Heart left ventricle (tissue), 16 donors: ENCODE measurements at regions of chr5 and their contacts with region 1.

Region 1: DNA sequence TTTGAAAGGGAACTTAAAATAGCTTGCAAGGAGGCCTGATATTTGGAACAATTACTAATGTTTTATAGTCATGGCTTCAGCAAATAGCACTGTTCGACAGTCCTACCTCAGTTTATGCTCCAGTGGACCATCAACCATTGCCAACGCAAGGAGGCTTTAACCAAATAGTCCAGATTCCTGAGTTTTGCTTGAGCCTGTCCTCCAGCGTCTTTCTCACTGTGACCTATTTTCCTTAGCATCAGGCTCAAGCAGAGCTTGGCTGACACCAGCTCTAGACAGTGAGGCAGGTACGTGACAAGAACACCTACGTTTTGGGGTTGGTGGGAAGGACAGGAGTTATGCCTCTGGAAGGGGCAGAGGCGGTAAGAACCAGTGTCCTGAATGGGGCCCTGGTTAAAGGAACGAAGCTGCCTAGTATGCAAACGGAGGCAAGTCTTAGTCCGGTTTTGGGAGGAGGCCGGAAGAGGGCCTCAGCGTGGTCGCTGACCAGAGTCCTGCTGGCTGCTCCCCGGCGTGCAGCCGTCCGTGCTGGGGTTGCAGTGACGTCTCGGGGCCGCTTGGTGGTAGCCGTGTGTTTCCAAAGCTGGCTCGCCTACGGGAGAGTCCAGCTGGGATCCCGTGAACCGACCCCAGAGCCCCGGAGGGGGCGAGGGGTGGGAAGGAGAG is 998 bp upstream of the FGF18 start:
- DNase-seq: peak; percentile 83 to 91 (median 85)
- ATAC-seq: peak; percentile 79 to 86 (median 80)
- H3K4me3 ChIP-seq: peak overlapping the region; percentile 44 to 77 (median 59)
- H3K27ac ChIP-seq: peak overlapping the region in 8 of 12 donors; percentile 73 to 93 (median 84)
- H3K4me1 ChIP-seq: peaks cover 4 to 54% (median 26%) of the 10 kb centered on the region in 12 donors
- H3K27me3 ChIP-seq: peaks cover 0 to 29% (median 0%) of the 10 kb centered on the region in 9 donors
- CTCF ChIP-seq: peak; percentile 77 to 99 (median 94)
- POLR2A ChIP-seq: no peak

Region 2: GRCh38 chr5:171137768-171138525 is 280.5 kb before region 1 on chr5:
- intact Hi-C with region 1: no loop called
- DNase-seq: no peak
- ATAC-seq: no peak
- H3K4me3 ChIP-seq: no peak overlapping the region
- H3K27ac ChIP-seq: no peak overlapping the region
- H3K4me1 ChIP-seq: no peaks in the 10 kb centered on the region
- H3K27me3 ChIP-seq: no peaks in the 10 kb centered on the region
- CTCF ChIP-seq: no peak
- POLR2A ChIP-seq: no peak

Region 3: GRCh38 chr5:171450423-171451331 is 32.2 kb after region 1 on chr5:
- intact Hi-C with region 1: no loop called
- DNase-seq: peak; percentile 56 to 80 (median 75)
- ATAC-seq: peak in 3 of 4 donors; percentile 60 to 70 (median 65)
- H3K4me3 ChIP-seq: peak overlapping the region in 11 of 12 donors; percentile 19 to 63 (median 52)
- H3K27ac ChIP-seq: peak overlapping the region; percentile 46 to 91 (median 83)
- H3K4me1 ChIP-seq: peaks cover 0 to 31% (median 11%) of the 10 kb centered on the region in 12 donors
- H3K27me3 ChIP-seq: peaks cover 0 to 10% (median 0%) of the 10 kb centered on the region in 9 donors
- CTCF ChIP-seq: no peak
- POLR2A ChIP-seq: no peak

Region 4: DNA sequence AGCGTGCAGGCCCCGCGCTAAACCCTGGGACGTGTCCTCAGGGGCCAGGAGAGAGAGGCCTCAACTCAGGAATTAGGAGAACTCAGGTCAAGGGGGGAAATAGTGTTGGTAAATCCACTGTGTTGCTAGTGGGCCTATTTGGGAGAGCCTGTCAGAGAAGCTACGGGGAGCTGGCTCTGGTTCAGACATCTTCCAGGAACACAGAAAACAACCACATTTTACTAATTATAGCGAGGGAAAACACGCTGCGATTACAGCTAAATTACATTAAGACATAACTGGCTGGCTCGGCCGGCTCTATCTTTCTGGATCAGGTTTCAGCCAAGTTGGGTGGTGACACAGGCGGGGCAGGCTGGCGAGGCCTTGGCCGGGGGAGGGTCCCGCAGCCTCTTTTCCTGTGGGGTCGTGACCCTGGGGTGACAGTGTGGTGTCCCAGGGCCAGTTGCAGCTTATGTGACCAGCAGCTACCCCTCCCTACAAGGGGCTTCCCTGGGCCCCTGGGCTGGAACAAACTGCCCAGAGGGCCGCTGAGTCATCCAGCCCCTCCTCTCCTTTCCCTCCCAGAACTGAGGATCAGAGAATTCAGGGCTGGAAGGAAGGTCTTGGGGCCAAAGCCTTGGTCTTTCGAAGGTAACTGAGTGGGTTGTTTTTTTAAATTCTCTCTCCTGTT is 76.1 kb after region 1 on chr5:
- intact Hi-C with region 1: loop called in 3 of 10 experiments (anchors 5 to 10 kb)
- DNase-seq: peak; percentile 69 to 79 (median 75)
- ATAC-seq: peak; percentile 74 to 88 (median 84)
- H3K4me3 ChIP-seq: peak overlapping the region in 4 of 12 donors; percentile 3 to 28 (median 10)
- H3K27ac ChIP-seq: peak overlapping the region; percentile 61 to 90 (median 80)
- H3K4me1 ChIP-seq: peaks cover 2 to 43% (median 24%) of the 10 kb centered on the region in 12 donors
- H3K27me3 ChIP-seq: no peaks in the 10 kb centered on the region
- CTCF ChIP-seq: no peak
- POLR2A ChIP-seq: no peak

Region 5: DNA sequence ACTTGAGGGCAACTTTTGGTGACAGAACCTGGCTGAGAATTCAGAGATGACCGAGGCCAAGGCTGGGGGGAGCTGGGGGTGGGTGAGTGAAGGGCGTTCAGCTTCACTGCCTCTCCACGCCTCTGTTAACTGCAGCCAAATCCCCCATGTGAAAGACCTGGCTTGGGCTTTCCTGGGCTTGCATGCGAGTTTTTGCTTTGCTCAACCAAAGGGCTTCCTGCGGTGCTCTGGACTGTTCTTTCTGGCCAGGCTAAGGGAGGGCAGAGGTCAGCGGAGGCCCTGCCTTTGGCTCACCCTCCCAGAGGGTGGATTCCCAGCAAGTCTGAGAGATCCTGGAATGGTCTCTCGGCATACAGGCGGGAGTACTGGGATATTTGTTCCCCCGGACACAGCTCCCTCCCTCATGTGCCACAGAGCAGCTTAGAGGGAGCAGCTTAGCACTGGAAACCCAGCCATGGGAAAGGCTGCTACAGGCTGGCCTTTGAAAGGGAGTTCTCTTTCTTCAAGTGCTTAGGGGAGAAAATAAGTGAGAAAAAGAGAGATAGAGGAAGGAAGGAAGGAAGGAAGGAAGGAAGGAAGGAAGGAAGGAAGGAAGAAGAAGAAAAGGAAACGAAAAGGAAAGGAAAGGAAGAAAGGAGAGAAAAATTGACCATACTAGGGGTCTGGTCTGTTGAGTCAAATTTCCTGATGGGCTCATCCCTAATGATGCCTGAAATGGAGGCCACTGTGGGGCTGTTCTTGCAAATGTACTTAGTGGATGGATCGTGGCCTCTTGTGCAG is 159.8 kb after region 1 on chr5:
- intact Hi-C with region 1: loop called in 5 of 10 experiments (anchors 5 to 10 kb)
- DNase-seq: peak in 2 of 5 donors; percentile 45 to 60
- ATAC-seq: peak; percentile 47 to 63 (median 54)
- H3K4me3 ChIP-seq: no peak overlapping the region
- H3K27ac ChIP-seq: peak overlapping the region in 10 of 12 donors; percentile 37 to 74 (median 58)
- H3K4me1 ChIP-seq: peaks cover 0 to 47% (median 26%) of the 10 kb centered on the region in 12 donors
- H3K27me3 ChIP-seq: no peaks in the 10 kb centered on the region
- CTCF ChIP-seq: no peak
- POLR2A ChIP-seq: no peak

Region 6: DNA sequence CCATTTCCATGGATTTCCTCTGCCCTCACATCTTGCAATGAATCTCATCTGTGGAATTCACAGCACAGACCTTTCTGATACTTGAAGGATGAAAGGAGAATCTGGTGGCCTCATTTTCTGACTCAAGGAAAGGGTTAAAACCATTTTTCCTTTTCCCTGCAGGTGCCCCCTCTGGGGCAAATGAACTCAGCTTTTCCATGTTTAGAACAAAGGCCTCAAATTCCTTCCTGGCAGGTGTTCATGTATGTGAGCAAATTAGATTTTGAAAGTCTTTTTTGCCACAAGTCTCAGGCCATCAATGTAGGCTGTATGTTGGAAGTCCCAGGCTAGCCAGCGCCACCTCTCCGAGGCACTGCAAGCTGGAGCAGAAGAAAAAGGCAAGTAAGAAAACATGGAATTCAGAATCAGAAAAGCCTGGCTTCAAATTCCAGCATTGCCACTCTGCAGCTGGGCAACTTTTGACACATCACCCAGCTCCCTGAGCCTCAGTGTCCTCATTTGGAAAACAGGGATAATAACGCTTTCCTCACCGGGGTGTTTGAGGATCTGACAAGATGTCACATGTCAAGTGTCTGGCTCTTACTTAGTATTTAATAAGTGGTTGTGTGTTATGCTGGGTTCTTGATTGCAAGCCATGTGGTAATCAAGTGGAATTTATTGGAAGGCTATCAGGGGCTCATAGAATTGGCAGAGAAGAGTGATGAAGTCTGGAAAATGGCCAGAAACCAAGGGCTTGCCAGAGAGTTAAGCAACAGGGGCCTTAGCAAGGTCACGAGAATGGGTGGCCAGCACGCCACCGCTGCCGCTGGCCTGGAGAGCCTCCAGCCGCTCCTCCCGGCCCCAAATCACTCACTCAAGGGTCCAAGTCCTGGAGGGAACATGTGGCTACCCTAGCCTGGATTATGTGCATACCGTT is 318.8 kb after region 1 on chr5:
- intact Hi-C with region 1: loop called in 3 of 10 experiments (anchors 5 to 10 kb)
- DNase-seq: peak in 4 of 5 donors; percentile 64 to 81 (median 69)
- ATAC-seq: peak; percentile 75 to 87 (median 84)
- H3K4me3 ChIP-seq: peak overlapping the region in 7 of 12 donors; percentile 10 to 48 (median 35)
- H3K27ac ChIP-seq: peak overlapping the region in 11 of 12 donors; percentile 32 to 86 (median 69)
- H3K4me1 ChIP-seq: peaks cover 0 to 29% (median 12%) of the 10 kb centered on the region in 12 donors
- H3K27me3 ChIP-seq: no peaks in the 10 kb centered on the region
- CTCF ChIP-seq: peak in 4 of 12 donors; percentile 11 to 40 (median 27)
- POLR2A ChIP-seq: no peak

Region 7: GRCh38 chr5:171850324-171851285 is 432.2 kb after region 1 on chr5:
- intact Hi-C with region 1: loop called (anchors 2 to 10 kb)
- DNase-seq: no peak
- ATAC-seq: peak in 3 of 4 donors; percentile 8 to 39 (median 31)
- H3K4me3 ChIP-seq: no peak overlapping the region
- H3K27ac ChIP-seq: peak overlapping the region in 1 of 12 donors; percentile 36
- H3K4me1 ChIP-seq: peaks cover 0 to 16% (median 0%) of the 10 kb centered on the region in 12 donors
- H3K27me3 ChIP-seq: no peaks in the 10 kb centered on the region
- CTCF ChIP-seq: peak in 6 of 12 donors; percentile 16 to 36 (median 30)
- POLR2A ChIP-seq: no peak

Region 8: DNA sequence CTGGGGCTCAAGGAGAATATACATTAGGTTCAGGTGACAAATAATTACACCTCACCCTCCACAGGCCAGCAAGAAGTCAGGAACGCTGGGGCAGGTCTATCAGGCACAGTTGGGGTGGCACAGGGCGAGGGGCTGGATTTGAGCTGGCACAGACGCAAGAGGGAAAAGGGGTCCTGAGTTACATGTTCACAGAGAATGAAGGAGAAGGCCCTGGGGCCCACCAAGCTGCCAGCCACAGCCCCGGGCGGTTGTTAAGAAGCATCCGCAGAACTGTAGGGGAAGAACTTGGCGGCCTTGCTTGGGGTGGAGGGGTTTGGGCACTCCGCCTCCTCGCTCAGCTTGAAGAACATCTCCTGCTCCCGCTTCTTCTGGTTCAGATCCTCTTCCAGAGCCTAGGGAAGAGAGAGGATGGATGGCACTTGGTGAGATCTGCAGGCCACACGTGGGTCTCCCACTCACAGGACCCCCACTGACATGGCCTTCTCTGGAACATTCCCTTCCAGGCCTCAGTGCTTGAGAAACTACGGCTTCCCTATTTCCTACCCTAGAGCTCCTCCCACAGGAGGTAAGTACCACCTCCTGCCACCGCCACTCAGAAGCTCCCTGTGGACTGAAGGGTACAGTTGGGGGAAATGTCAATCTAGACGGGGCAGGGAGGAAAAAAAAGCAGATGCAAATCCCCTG is 626.3 kb after region 1 on chr5:
- intact Hi-C with region 1: loop called in 5 of 10 experiments (anchors 10 kb)
- DNase-seq: no peak
- ATAC-seq: no peak
- H3K4me3 ChIP-seq: no peak overlapping the region
- H3K27ac ChIP-seq: no peak overlapping the region
- H3K4me1 ChIP-seq: peaks cover 0 to 16% (median 5%) of the 10 kb centered on the region in 12 donors
- H3K27me3 ChIP-seq: no peaks in the 10 kb centered on the region
- CTCF ChIP-seq: no peak
- POLR2A ChIP-seq: no peak